ENCODE measurements at regions of chr10 and their contacts with region 1.

Region 1: DNA sequence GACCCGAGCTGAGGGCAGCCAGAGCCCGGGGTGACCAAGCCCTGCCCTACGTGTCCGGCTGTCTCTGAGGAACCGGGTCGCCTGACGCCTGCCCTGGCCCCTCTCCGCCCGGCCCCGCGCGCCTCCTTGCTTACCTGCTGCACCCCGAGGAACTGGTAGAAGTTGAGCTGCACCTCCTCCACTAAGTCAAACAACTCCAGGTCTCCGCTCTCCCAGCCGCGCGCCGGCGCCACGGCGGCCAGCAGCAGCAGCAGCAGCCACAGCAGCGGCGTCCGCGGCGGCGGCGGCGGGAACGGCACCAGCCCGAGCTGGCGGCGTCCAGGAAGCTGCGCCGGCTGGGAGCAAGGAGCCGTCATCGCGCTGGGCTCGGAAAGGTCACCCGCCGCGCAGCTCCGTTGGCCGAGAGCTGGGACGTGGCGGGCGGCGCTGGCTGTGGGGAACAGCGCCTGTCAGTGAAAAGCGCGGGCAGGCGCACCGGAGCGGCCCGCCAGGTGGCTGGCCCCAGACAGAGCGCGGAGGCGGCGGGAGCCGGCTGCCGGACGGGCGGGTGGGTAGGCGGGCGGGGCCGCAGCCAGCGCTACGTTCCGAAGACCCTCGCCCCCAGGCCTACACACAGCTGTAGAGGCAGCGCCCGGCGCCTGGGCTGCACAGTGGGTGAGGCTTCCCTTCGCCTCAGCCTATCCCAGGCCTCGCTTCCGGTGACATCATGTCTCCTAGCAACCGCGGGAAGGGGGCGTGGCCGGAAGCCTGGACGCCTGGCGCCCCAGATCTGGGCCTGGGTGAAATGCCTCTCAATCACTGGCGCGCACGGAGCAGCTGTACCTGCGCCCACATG is at the start of gene DNAJC1:
- DNase-seq: peak; percentile 87
- ATAC-seq: peak; percentile 97
- H3K4me3 ChIP-seq: peak within 1 kb of the TSS; percentile 79 to 82
- H3K27ac ChIP-seq: peak within 1 kb of the TSS; percentile 73
- H3K4me1 ChIP-seq: peaks cover 8 to 15% of the 10 kb centered on the region in 2 experiments; a peak in 3 of 4 replicates
- H3K27me3 ChIP-seq: no peaks in the 10 kb centered on the region
- CTCF ChIP-seq: no peak
- POLR2A ChIP-seq: peak; percentile 52
- RAD21 ChIP-seq: no peak
- total RNA-seq, gene DNAJC1: 17.9 TPM

Region 2: DNA sequence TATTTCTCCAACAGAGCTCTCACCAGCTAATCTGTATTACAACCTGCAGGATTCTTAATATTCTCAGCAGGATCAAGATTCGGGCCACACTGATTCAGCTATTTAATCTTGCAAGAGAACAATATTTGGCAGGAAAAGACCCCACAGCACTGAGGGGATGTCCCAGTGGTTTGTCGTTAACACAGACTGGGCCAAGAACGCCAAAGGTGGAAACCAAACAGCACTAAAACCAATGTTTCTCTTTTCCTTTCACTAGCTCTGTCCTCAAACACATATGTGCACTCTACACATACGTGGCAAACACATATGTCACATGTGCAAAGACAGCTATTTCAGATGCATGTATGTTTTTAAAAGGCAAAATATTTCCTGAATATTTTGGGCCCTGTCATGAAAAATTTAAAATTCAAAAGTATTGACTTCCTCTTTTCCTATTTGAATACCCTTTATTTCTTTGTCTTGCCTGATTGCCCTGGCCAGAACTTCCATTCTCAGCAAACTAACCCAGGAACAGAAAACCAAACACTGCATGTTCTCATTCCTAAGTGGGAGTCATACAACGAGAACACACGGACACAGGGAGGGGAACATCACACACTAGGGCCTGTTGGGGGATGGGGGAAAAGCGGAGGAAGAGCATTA is 1054.5 kb before region 1 on chr10:
- CTCF ChIA-PET with region 1: no interaction called
- POLR2A ChIA-PET with region 1: no interaction called
- RAD21 ChIA-PET with region 1: no interaction called
- intact Hi-C with region 1: no loop called
- DNase-seq: no peak
- ATAC-seq: no peak
- H3K4me3 ChIP-seq: no peak overlapping the region
- H3K27ac ChIP-seq: no peak overlapping the region
- H3K4me1 ChIP-seq: no peaks in the 10 kb centered on the region
- H3K27me3 ChIP-seq: no peaks in the 10 kb centered on the region
- CTCF ChIP-seq: no peak
- POLR2A ChIP-seq: no peak
- RAD21 ChIP-seq: no peak

Region 3: DNA sequence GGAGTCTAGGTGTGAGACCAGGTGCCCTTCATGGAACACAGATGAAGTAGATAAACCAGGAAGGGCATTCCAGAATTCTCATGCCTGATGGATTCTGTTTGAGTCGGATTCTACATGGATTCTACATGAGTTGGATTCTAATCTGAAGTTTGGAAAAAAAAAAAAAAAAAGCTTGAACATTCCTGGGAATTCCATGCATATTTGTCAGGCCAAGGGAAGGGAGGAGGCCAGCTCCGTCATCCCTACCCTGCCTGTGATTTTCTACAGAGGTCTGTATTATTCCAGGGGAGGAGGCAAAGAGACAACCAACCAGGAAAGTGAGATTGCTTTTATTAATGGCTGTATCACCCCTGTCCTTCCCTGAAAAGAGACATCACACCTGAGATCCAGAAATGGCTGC is 242.3 kb after region 1 on chr10:
- CTCF ChIA-PET with region 1: no interaction called
- POLR2A ChIA-PET with region 1: no interaction called
- RAD21 ChIA-PET with region 1: no interaction called
- intact Hi-C with region 1: loop called (anchors 5 kb)
- DNase-seq: no peak
- ATAC-seq: no peak
- H3K4me3 ChIP-seq: no peak overlapping the region
- H3K27ac ChIP-seq: peak overlapping the region; percentile 74; the same call in 1 of the 2 replicates
- H3K4me1 ChIP-seq: peaks cover 28 to 50% of the 10 kb centered on the region in 2 experiments
- H3K27me3 ChIP-seq: no peaks in the 10 kb centered on the region
- CTCF ChIP-seq: no peak
- POLR2A ChIP-seq: no peak
- RAD21 ChIP-seq: no peak

Region 4: DNA sequence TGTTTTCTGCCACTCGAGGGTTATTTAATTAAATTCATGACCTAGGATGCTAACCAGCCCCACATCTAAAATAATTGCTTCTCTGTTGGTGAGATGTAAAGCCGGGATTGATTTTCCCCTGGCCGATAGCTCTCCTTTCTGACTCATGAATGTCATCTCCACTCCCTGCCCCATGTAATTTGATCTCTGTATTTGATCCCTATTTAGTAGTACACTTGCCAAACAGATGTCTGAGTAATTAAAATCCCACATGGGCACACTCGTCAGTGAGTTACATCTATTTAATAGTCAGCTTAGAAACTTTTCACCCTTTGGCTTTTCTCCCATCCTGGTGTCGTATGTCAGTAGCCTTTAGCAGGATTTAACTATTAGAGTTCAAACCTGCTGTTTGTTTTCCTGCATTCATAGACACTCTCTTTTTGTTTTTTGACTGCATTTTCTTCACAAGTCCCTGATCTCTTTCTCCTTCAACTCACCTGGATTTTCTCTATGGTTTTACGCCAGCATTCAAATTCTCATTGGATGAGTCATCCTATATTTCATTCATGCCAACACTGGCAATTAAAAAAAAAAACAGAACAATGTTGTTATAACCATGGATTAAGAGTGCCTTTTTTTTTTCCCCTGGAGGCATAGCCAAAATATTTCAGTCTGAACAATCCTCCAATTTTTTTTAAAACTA is 424.7 kb after region 1 on chr10:
- CTCF ChIA-PET with region 1: no interaction called
- POLR2A ChIA-PET with region 1: no interaction called
- RAD21 ChIA-PET with region 1: no interaction called
- intact Hi-C with region 1: loop called (anchors 5 kb)
- DNase-seq: peak; percentile 92
- ATAC-seq: peak; percentile 80
- H3K4me3 ChIP-seq: peak overlapping the region; percentile 4 to 46; a peak in 3 of 4 replicates
- H3K27ac ChIP-seq: peak overlapping the region; percentile 92
- H3K4me1 ChIP-seq: peaks cover 44 to 63% of the 10 kb centered on the region in 2 experiments
- H3K27me3 ChIP-seq: no peaks in the 10 kb centered on the region
- CTCF ChIP-seq: no peak
- POLR2A ChIP-seq: no peak
- RAD21 ChIP-seq: no peak

Region 5: GRCh38 chr10:22823109-22823508 is 819.8 kb after region 1 on chr10:
- CTCF ChIA-PET with region 1: no interaction called
- POLR2A ChIA-PET with region 1: no interaction called
- RAD21 ChIA-PET with region 1: no interaction called
- intact Hi-C with region 1: loop called (anchors 10 kb)
- DNase-seq: peak; percentile 95
- ATAC-seq: peak; percentile 76
- H3K4me3 ChIP-seq: peak overlapping the region in 1 of 2 experiments; percentile 41; a peak in 3 of 4 replicates
- H3K27ac ChIP-seq: peak overlapping the region; percentile 97
- H3K4me1 ChIP-seq: peaks cover 39 to 59% of the 10 kb centered on the region in 2 experiments
- H3K27me3 ChIP-seq: no peaks in the 10 kb centered on the region
- CTCF ChIP-seq: no peak
- POLR2A ChIP-seq: no peak
- RAD21 ChIP-seq: peak; percentile 33; the same call in 1 of the 2 replicates